ENCODE measurements at regions of chr16 and their contacts with region 1.

Region 1: DNA sequence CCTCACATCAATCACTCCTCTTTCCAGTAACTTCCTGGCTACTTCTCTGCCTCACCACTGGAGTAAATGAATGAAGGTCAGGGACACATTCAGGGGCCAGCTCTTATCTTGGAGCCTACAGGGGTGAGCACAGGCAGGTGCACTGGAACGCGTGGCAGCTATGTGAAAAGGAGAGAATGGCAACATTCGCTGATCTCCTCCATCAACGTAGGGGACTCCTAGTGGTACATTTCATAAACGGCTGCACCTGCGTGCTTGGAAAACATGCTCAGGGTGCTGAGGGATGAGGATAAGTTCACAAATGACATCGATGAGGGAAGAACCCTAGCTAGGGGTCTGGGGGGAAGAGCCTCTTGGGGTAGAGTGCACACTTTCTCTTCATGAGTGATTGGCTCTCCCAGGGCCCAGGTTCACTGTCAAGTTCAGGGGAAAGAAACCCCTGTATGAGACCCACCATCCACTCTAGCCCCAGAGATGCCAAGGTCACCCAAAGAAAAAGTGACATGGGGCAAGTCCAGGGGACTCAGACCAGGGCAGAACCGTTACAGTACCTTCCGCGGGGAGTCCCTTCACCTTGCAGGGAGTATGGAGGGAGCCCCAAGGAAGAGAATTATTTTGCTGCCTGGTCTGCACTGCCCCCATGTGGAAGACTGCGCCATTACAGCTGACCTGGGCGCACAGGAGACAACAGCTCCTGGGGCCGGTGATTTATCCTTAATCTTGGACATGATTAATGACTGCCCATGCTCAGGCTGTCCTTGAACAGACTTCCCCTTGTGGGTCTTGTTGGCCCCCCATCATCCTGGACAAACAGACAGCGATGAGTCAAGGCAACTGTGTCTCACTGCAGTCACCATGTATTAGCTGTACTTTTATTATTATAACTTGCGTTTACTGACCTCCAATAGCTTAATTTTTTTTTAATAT is 30.1 kb downstream of the VAC14 start:
- DNase-seq: peak; percentile 81
- ATAC-seq: peak; percentile 94
- H3K4me3 Mint-ChIP-seq: no peak overlapping the region
- H3K27ac Mint-ChIP-seq: no peak overlapping the region
- H3K4me1 Mint-ChIP-seq: no peaks in the 10 kb centered on the region
- H3K27me3 Mint-ChIP-seq: no peaks in the 10 kb centered on the region

Region 2: GRCh38 chr16:70331588-70332358 is 439.1 kb before region 1 on chr16:
- CTCF ChIA-PET with region 1: no interaction called
- POLR2A ChIA-PET with region 1: no interaction called
- intact Hi-C with region 1: no loop called
- DNase-seq: peak; percentile 34
- ATAC-seq: no peak
- H3K4me3 Mint-ChIP-seq: no peak overlapping the region
- H3K27ac Mint-ChIP-seq: no peak overlapping the region
- H3K4me1 Mint-ChIP-seq: no peaks in the 10 kb centered on the region
- H3K27me3 Mint-ChIP-seq: no peaks in the 10 kb centered on the region

Region 3: DNA sequence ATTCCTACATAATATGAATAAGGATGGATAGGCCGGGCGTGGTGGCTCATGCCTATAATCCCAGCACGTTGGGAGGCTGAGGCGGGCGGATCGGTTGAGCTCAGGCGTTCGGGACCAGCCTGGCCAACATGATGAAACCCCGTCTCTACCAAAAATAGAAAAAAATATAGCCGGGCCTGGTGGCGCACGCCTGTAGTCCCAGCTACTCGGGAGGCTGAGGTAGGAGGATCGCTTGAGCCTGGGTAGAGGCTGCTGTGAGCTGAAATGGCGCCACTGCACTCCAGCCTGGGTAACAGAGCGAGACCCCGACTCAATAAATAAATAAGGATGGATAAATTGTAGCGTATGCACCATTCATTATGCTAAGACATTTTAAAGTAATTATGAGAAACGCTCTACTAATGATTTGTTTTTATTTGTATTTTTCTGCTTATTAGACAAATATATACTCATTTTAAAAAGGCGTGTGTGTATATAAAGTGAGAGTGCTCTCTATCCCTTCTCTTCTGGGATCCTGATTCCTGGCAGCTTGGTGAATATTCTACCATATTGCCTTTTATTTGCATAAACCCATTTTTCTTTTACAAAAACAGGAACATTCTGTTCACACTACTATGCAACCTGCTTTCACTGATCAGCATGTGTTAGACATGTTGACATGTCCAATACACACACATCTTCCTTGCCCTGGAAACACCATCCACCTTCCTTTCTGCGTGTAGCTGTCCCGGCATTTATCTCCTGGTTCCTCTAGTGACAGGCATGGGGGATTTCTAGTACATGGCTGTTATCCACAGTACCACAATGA is 397.8 kb before region 1 on chr16:
- CTCF ChIA-PET with region 1: interaction called, 10 read pairs
- POLR2A ChIA-PET with region 1: no interaction called
- intact Hi-C with region 1: loop called in 1 of 2 experiments (anchors 5 kb)
- DNase-seq: no peak
- ATAC-seq: no peak
- H3K4me3 Mint-ChIP-seq: no peak overlapping the region
- H3K27ac Mint-ChIP-seq: no peak overlapping the region
- H3K4me1 Mint-ChIP-seq: peaks cover 7% of the 10 kb centered on the region
- H3K27me3 Mint-ChIP-seq: no peaks in the 10 kb centered on the region

Region 4: GRCh38 chr16:70679666-70680494 is 91.0 kb before region 1 on chr16:
- CTCF ChIA-PET with region 1: interaction called, 45 read pairs
- POLR2A ChIA-PET with region 1: no interaction called
- intact Hi-C with region 1: loop called (anchors 1 kb)
- DNase-seq: peak; percentile 47
- ATAC-seq: peak; percentile 67
- H3K4me3 Mint-ChIP-seq: no peak overlapping the region
- H3K27ac Mint-ChIP-seq: no peak overlapping the region
- H3K4me1 Mint-ChIP-seq: no peaks in the 10 kb centered on the region
- H3K27me3 Mint-ChIP-seq: peaks cover 5% of the 10 kb centered on the region

Region 5: GRCh38 chr16:70737377-70738082 is 33.4 kb before region 1 on chr16:
- CTCF ChIA-PET with region 1: interaction called, 9 read pairs
- POLR2A ChIA-PET with region 1: interaction called, 4 read pairs
- intact Hi-C with region 1: loop called in 1 of 2 experiments (anchors 2 kb)
- DNase-seq: peak; percentile 91
- ATAC-seq: peak; percentile 88
- H3K4me3 Mint-ChIP-seq: peak overlapping the region; percentile 55
- H3K27ac Mint-ChIP-seq: peak overlapping the region; percentile 97
- H3K4me1 Mint-ChIP-seq: peaks cover 60% of the 10 kb centered on the region
- H3K27me3 Mint-ChIP-seq: no peaks in the 10 kb centered on the region

Region 6: DNA sequence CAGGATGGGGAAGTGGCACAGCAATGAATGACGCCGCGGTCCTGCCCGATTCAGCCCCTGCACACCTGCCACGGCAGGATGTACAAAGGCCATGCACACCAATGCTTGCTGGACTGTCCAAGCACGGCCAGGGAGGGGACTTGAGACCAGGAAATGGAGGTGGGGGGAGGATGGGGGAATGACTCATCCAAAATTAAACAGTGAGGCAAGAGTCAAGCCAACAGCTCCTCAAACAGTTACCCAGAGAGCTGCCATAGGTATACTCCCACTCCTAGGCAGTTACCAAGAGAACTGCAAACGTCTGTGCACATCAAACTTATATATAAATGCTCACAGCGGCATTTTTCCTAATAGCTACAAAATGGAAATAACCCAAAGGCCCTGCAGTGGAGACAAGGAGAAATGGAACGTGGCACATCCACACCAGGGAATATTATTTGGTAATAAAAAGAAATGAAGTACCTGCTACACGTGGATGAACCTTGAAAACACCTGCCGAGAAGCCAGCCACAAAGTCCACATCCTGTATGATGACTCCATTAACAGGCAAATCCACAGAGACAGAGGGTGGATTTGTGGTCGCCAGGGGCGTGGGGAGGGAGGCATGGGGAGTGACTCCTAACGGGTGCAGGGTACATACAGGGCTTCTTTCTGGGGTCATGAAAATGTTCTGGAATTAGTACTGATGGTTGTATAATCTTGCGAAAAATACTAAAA is 24.0 kb before region 1 on chr16:
- CTCF ChIA-PET with region 1: interaction called, 19 read pairs
- POLR2A ChIA-PET with region 1: no interaction called
- intact Hi-C with region 1: no loop called
- DNase-seq: peak; percentile 77
- ATAC-seq: peak; percentile 73
- H3K4me3 Mint-ChIP-seq: no peak overlapping the region
- H3K27ac Mint-ChIP-seq: peak overlapping the region; percentile 88
- H3K4me1 Mint-ChIP-seq: peaks cover 47% of the 10 kb centered on the region
- H3K27me3 Mint-ChIP-seq: no peaks in the 10 kb centered on the region

Region 7: DNA sequence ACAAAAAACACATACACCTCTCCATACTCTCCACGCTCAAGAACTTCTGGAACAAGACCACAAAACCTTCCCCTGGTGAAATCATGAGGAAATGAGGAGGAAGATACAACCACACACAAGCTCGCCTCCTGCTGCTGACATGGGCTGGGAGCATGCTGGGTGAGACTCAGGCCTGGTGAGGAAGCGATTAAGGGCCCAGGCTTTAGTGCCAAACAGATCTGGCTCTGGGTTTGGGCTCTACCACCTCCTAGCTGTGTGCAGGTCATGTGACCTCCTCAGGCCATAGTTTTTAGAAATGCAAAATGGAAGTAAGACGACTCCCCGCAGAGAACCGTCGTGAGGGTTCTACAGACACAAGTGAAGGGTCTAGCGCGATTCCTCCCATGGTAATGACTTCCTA is 11.2 kb before region 1 on chr16:
- CTCF ChIA-PET with region 1: interaction called, 36 read pairs
- POLR2A ChIA-PET with region 1: no interaction called
- intact Hi-C with region 1: no loop called
- DNase-seq: no peak
- ATAC-seq: no peak
- H3K4me3 Mint-ChIP-seq: no peak overlapping the region
- H3K27ac Mint-ChIP-seq: no peak overlapping the region
- H3K4me1 Mint-ChIP-seq: peaks cover 9% of the 10 kb centered on the region
- H3K27me3 Mint-ChIP-seq: no peaks in the 10 kb centered on the region

Region 8: GRCh38 chr16:70793851-70794502 is 23.1 kb after region 1 on chr16:
- CTCF ChIA-PET with region 1: interaction called, 17 read pairs
- POLR2A ChIA-PET with region 1: no interaction called
- intact Hi-C with region 1: no loop called
- DNase-seq: no peak
- ATAC-seq: no peak
- H3K4me3 Mint-ChIP-seq: no peak overlapping the region
- H3K27ac Mint-ChIP-seq: no peak overlapping the region
- H3K4me1 Mint-ChIP-seq: peaks cover 3% of the 10 kb centered on the region
- H3K27me3 Mint-ChIP-seq: no peaks in the 10 kb centered on the region